ENCODE measurements at regions of chrX and their contacts with region 1.

Region 1: DNA sequence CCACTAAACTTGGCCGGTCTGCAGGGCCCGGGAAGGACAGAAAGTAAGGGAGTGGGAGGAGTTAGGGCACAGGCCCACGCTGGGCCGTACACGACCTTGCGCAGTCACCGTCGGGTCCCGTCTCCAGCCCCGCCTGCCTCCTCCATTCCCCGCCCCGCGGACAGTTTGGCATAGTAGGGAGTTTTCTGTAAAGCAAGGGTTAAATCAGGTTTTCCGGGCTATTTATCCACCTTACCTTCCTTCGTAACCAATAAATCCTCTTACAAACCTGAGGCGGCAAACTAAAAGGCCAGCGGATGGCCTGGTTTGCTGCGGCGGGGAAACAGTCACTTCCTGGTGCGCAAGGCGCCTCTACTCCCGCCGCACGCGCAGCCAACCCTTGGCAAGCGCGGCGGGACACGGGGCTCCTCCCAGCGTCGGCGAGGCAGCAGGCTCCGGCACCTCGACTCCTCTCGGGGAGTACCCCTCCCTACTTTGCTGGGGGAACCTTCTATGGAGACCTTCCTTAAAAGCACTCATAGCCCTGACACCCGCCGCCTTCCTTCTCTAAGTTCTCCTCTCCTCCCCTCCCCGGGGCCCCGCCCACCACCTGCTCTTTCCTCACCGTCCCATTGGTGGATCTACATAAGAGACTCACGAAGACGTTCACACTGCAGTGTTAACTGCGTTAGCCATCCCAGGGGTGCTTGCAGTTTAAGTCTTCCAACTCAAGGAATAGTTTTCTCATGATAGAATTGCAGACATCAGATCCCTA is at the start of gene TRMT2B:
- DNase-seq: peak; percentile 47 to 87 (median 80)
- ATAC-seq: peak; percentile 92
- H3K4me3 ChIP-seq: peak within 1 kb of the TSS; percentile 81
- H3K4me3 Mint-ChIP-seq: peak within 1 kb of the TSS; percentile 78 to 94 (median 92)
- H3K27ac ChIP-seq: peak within 1 kb of the TSS; percentile 93
- H3K27ac Mint-ChIP-seq: peak within 1 kb of the TSS; percentile 95 to 98 (median 97)
- H3K4me1 ChIP-seq: peaks cover 4% of the 10 kb centered on the region in 2 donors
- H3K4me1 Mint-ChIP-seq: peaks cover 12 to 43% (median 22%) of the 10 kb centered on the region in 7 donors
- H3K27me3 ChIP-seq: no peaks in the 10 kb centered on the region
- H3K27me3 Mint-ChIP-seq: no peaks in the 10 kb centered on the region
- total RNA-seq, gene TRMT2B: 25.5 to 51.1 (median 41.4) TPM

Region 2: GRCh38 chrX:100819837-100820666 is 231.7 kb before region 1 on chrX and contains the start of gene CSTF2:
- CTCF ChIA-PET with region 1: no interaction called
- POLR2A ChIA-PET with region 1: no interaction called
- intact Hi-C with region 1: loop called in 1 of 2 experiments (anchors 1 kb)
- DNase-seq: peak; percentile 58 to 87 (median 81)
- ATAC-seq: peak; percentile 98
- H3K4me3 ChIP-seq: peak within 1 kb of the TSS; percentile 68
- H3K4me3 Mint-ChIP-seq: peak within 1 kb of the TSS; percentile 85 to 96 (median 91)
- H3K27ac ChIP-seq: peak within 1 kb of the TSS; percentile 80
- H3K27ac Mint-ChIP-seq: peak within 1 kb of the TSS; percentile 85 to 97 (median 93)
- H3K4me1 ChIP-seq: no peaks in the 10 kb centered on the region
- H3K4me1 Mint-ChIP-seq: peaks cover 5 to 10% (median 6%) of the 10 kb centered on the region in 7 donors
- H3K27me3 ChIP-seq: no peaks in the 10 kb centered on the region
- H3K27me3 Mint-ChIP-seq: peaks cover 0 to 12% (median 4%) of the 10 kb centered on the region in 5 donors
- total RNA-seq, gene CSTF2: 8.6 to 41.8 (median 16.1) TPM

Region 3: GRCh38 chrX:100928660-100929613 is 122.8 kb before region 1 on chrX and contains the start of gene XKRX:
- CTCF ChIA-PET with region 1: no interaction called
- POLR2A ChIA-PET with region 1: no interaction called
- intact Hi-C with region 1: loop called in 1 of 2 experiments (anchors 1 kb)
- DNase-seq: peak in 8 of 9 donors; percentile 16 to 64 (median 41)
- ATAC-seq: peak; percentile 90
- H3K4me3 ChIP-seq: peak within 1 kb of the TSS; percentile 56
- H3K4me3 Mint-ChIP-seq: peak within 1 kb of the TSS; percentile 87 to 97 (median 95)
- H3K27ac ChIP-seq: peak within 1 kb of the TSS; percentile 65
- H3K27ac Mint-ChIP-seq: peak within 1 kb of the TSS in 8 of 9 donors; percentile 50 to 90 (median 86)
- H3K4me1 ChIP-seq: peaks cover 0 to 10% of the 10 kb centered on the region in 2 donors
- H3K4me1 Mint-ChIP-seq: peaks cover 8 to 57% (median 47%) of the 10 kb centered on the region in 7 donors
- H3K27me3 ChIP-seq: no peaks in the 10 kb centered on the region
- H3K27me3 Mint-ChIP-seq: no peaks in the 10 kb centered on the region
- total RNA-seq, gene XKRX: 0.10 to 3.4 (median 1.5) TPM

Region 4: GRCh38 chrX:101348452-101349192 is 296.9 kb after region 1 on chrX and contains the start of gene TIMM8A:
- CTCF ChIA-PET with region 1: no interaction called
- POLR2A ChIA-PET with region 1: no interaction called
- intact Hi-C with region 1: loop called (anchors 1 kb)
- DNase-seq: peak; percentile 48 to 79 (median 72)
- ATAC-seq: peak; percentile 99
- H3K4me3 ChIP-seq: peak within 1 kb of the TSS; percentile 75
- H3K4me3 Mint-ChIP-seq: peak within 1 kb of the TSS; percentile 84 to 93 (median 91)
- H3K27ac ChIP-seq: peak within 1 kb of the TSS; percentile 91
- H3K27ac Mint-ChIP-seq: peak within 1 kb of the TSS; percentile 80 to 96 (median 91)
- H3K4me1 ChIP-seq: peaks cover 0 to 4% of the 10 kb centered on the region in 2 donors
- H3K4me1 Mint-ChIP-seq: peaks cover 0 to 25% (median 19%) of the 10 kb centered on the region in 7 donors
- H3K27me3 ChIP-seq: no peaks in the 10 kb centered on the region
- H3K27me3 Mint-ChIP-seq: no peaks in the 10 kb centered on the region
- total RNA-seq, gene TIMM8A: 6.7 to 13.6 (median 12.2) TPM

Region 5: DNA sequence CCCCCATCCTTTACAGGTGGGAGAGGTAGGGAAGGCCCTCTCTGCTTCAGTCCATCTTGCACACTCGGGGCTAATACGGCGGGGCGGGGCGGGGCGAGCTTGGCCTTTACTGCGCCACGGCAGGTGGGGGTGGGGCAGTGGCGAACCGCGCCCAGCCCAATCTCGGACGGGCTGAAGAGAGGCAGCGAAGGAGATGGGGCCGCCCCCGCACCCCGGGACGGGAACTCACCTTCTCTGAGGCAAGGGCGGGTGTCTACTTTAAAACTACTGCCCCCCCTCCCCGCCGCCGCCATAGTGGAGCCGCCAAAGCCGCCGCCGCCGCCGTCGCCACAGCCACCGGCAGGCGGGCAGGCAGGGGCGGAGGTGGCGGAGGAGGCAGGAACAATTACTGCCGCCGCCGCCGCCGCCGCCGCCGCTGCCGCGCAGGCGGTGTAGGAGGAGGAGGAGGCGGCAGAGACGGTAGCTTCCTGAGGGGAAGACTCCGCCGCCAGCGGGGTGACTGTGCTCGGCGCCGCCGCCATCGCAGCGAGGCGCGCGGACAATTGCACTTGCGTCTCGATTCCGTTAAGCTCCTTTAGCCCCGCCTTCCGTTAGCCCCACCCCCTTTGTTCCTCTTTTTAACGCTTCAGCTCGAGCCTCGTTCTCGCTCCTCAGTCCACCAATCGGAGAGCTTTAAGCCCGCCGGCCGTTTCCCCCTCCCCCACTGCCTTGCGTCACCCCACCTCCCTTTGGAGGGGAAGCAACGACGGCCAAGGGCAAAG is 879.9 kb after region 1 on chrX and contains the start of gene ZMAT1:
- CTCF ChIA-PET with region 1: no interaction called
- POLR2A ChIA-PET with region 1: no interaction called
- intact Hi-C with region 1: loop called in 1 of 2 experiments (anchors 5 kb)
- DNase-seq: peak; percentile 73 to 92 (median 87)
- ATAC-seq: peak; percentile 93
- H3K4me3 ChIP-seq: peak within 1 kb of the TSS; percentile 63
- H3K4me3 Mint-ChIP-seq: peak within 1 kb of the TSS; percentile 80 to 95 (median 88)
- H3K27ac ChIP-seq: peak within 1 kb of the TSS; percentile 89
- H3K27ac Mint-ChIP-seq: peak within 1 kb of the TSS; percentile 87 to 99 (median 96)
- H3K4me1 ChIP-seq: peaks cover 0 to 8% of the 10 kb centered on the region in 2 donors
- H3K4me1 Mint-ChIP-seq: peaks cover 8 to 44% (median 33%) of the 10 kb centered on the region in 7 donors
- H3K27me3 ChIP-seq: no peaks in the 10 kb centered on the region
- H3K27me3 Mint-ChIP-seq: no peaks in the 10 kb centered on the region
- total RNA-seq, gene ZMAT1: 3.0 to 48.3 (median 32.2) TPM

Measured in naive thymus-derived CD4-positive, alpha-beta T cell (primary cell).